Activated naive CD4-positive, alpha-beta T cell treated with anti-CD3 and anti-CD28 coated beads for 36 hours (primary cell): ENCODE measurements at regions of chr1 and their contacts with region 1.

Region 1: DNA sequence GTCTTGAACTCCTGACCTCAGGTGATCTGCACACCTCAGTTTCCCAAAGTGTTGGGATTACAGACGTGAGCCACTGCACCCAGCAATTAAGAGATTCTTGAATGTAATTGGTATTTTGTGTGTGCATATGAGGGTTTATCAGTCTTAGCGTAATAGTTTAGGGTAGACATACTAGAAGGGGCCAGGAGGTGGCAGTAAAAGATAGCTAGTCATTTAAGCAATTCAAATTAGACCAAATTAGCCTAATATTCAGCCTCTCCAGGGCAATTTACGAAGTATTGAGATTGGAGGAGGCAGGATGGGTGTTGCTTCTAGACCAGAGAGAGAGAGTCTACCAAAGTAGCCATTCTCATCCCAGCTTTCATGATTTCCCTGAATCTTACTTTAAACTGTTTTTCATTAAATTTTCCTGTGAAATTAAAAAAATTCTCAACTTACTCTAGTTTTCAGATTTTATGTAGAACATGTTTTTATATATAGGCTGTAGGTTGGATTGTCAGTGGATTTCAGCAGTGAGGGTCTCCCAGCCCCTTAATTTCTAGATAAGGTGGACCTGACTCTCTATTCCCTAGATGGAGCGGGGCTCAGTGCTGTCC is 119.7 kb downstream of the HHAT start:
- DNase-seq: peak; percentile 56
- H3K4me3 Mint-ChIP-seq: no peak overlapping the region
- H3K27ac Mint-ChIP-seq: no peak overlapping the region
- H3K4me1 Mint-ChIP-seq: peaks cover 31% of the 10 kb centered on the region
- H3K27me3 Mint-ChIP-seq: peaks cover 7% of the 10 kb centered on the region

Region 2: GRCh38 chr1:210143465-210144062 is 304.8 kb before region 1 on chr1:
- CTCF ChIA-PET with region 1: no interaction called
- intact Hi-C with region 1: loop called (anchors 1 kb)
- DNase-seq: peak; percentile 77
- H3K4me3 Mint-ChIP-seq: no peak overlapping the region
- H3K27ac Mint-ChIP-seq: no peak overlapping the region
- H3K4me1 Mint-ChIP-seq: no peaks in the 10 kb centered on the region
- H3K27me3 Mint-ChIP-seq: peaks cover 13% of the 10 kb centered on the region

Region 3: DNA sequence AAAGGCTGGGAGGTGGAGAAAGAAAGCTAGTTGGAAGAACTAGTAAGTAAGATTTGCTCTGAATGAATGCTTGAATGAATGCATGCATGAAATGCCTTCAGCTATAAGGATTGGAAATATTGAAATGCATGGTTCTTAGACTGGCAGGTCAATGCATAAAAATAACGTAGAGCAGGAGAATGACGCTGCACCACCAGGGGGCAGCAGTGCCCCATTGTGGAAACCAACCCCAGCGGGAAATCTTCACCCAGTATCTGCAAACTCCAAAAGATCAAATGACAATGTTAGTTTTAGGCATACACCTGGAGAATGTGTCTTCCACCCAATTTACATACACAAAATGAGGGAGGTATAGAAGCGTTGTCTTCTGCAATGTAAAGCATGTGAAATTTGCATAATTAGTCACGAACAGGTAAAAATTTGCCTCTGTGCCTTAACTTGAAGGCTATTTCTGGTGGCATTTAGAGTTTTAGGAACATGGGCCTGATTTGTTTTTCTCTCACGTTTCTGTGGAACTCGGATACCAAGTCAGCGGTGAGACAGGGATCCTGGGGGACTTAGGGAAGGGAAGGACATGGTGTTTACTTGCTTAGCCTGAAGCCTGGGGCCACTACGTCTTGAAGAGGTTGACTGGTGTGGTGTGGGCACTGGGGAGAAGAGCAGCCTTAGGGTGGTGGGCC is 41.0 kb before region 1 on chr1:
- CTCF ChIA-PET with region 1: interaction called, 14 read pairs
- intact Hi-C with region 1: loop called (anchors 1 kb)
- DNase-seq: peak; percentile 86
- H3K4me3 Mint-ChIP-seq: no peak overlapping the region
- H3K27ac Mint-ChIP-seq: no peak overlapping the region
- H3K4me1 Mint-ChIP-seq: peaks cover 5% of the 10 kb centered on the region
- H3K27me3 Mint-ChIP-seq: peaks cover 2% of the 10 kb centered on the region

Region 4: DNA sequence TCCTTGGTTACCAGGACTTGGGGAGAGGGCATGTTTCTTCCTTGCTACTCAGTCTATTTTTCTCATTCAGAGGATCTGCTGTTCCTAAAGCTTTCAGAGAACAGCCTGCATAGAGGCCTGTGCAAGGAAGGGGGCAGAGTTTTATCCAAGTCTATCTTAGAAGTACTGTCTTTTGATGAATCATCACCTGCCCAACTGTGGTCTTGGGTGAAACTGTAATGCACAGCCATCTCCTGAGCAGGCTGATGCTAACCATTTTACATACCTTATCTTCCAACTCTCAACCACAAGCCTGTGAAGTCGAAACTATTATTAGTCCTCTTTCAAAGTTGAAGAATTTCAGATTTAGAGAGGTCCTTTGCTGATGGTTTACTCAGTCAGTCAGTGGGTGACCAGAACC is 248.3 kb after region 1 on chr1:
- CTCF ChIA-PET with region 1: no interaction called
- intact Hi-C with region 1: no loop called
- DNase-seq: peak; percentile 10
- H3K4me3 Mint-ChIP-seq: no peak overlapping the region
- H3K27ac Mint-ChIP-seq: no peak overlapping the region
- H3K4me1 Mint-ChIP-seq: peaks cover 14% of the 10 kb centered on the region
- H3K27me3 Mint-ChIP-seq: no peaks in the 10 kb centered on the region

Region 5: DNA sequence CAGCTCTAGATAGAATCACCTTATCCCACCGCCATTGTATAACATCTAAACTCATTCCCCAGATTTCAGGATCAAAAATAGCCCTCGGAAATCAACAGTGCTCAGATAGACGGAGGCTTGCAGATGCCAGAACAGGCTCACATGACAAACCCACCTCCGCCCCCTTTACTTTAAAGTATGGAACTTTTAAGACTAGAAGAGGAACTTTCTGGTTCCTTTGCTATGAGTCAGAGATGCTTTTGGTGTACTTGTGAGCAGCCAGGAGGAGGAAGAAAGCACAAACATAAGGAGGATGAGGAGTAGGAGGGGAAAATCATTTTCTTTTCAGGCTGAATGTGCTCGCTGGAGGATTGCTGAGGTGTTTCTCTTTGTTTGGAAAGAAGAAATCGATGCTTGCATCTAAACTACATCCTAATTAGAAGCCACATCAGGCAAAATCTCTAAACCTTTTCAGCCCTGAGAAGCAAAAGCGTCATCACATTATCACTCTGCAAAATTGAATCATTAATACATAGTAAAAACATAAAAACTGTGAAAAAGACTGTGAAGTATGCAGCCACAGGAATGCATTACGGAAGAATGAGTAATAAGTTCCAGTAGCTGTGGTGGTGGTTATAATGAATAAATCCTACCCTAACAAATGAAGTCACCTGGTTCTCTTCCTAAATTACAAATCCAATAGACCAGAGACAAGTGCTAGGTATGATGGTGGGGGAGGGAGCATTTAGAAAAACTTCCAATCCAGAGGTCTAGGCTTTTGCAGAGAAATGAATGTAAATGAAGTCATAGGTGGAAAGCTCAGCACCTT is 434.2 kb after region 1 on chr1:
- CTCF ChIA-PET with region 1: no interaction called
- intact Hi-C with region 1: loop called (anchors 5 kb)
- DNase-seq: peak; percentile 6
- H3K4me3 Mint-ChIP-seq: no peak overlapping the region
- H3K27ac Mint-ChIP-seq: peak overlapping the region; percentile 21
- H3K4me1 Mint-ChIP-seq: peaks cover 7% of the 10 kb centered on the region
- H3K27me3 Mint-ChIP-seq: peaks cover 14% of the 10 kb centered on the region

Region 6: DNA sequence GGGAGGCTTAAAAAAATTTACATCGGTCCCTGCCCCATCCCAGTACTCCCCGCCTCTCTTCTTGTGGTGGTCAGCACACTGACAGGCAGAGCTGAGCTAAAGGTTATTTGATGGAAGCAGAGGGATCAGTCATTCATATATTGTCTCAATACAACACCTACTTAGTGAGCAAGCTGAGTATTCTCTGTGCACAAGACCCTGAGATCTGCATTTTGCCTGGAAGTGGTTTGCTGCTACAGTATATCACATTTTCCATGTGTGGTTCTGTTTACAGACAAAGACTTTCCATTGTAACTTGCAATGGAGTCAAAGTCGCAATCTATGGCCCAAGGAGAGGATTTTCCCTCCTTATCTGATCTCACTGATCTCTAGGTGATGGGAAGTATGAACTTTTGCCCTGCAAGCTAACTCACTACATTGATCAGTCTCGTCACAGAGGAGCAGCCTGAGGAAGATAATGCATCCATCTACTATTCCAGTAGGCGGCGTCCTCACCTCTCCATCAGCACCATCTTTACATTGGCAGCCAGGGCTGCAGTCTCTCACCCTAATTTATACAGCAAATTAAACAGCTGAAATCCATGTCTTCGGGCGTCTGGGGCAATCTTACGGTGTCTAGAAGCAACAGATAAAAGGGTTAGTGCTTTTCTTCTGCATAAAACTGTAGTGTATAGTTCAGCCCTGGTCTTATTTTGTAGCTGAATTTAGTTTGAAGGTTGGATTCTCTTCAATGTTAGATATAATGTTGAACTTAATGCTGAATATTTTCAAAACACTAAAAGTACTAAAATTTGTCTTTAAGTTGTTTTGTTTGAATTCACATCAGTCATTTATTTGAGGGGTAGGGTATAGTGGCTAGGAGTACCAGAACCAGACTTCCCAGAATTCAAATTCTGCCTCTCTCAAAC is 875.0 kb after region 1 on chr1:
- CTCF ChIA-PET with region 1: no interaction called
- intact Hi-C with region 1: loop called (anchors 5 kb)
- DNase-seq: peak; percentile 85
- H3K4me3 Mint-ChIP-seq: no peak overlapping the region
- H3K27ac Mint-ChIP-seq: no peak overlapping the region
- H3K4me1 Mint-ChIP-seq: peaks cover 58% of the 10 kb centered on the region
- H3K27me3 Mint-ChIP-seq: no peaks in the 10 kb centered on the region

Region 7: GRCh38 chr1:211578640-211579433 is 1130.4 kb after region 1 on chr1 and contains the start of gene SLC30A1:
- CTCF ChIA-PET with region 1: no interaction called
- intact Hi-C with region 1: loop called (anchors 5 kb)
- DNase-seq: peak; percentile 99
- H3K4me3 Mint-ChIP-seq: peak within 1 kb of the TSS; percentile 90
- H3K27ac Mint-ChIP-seq: peak within 1 kb of the TSS; percentile 75
- H3K4me1 Mint-ChIP-seq: peaks cover 31% of the 10 kb centered on the region
- H3K27me3 Mint-ChIP-seq: no peaks in the 10 kb centered on the region
- total RNA-seq, gene SLC30A1: 4.4 to 4.7 TPM